ENCODE measurements at regions of chr9 and their contacts with region 1.

Region 1: DNA sequence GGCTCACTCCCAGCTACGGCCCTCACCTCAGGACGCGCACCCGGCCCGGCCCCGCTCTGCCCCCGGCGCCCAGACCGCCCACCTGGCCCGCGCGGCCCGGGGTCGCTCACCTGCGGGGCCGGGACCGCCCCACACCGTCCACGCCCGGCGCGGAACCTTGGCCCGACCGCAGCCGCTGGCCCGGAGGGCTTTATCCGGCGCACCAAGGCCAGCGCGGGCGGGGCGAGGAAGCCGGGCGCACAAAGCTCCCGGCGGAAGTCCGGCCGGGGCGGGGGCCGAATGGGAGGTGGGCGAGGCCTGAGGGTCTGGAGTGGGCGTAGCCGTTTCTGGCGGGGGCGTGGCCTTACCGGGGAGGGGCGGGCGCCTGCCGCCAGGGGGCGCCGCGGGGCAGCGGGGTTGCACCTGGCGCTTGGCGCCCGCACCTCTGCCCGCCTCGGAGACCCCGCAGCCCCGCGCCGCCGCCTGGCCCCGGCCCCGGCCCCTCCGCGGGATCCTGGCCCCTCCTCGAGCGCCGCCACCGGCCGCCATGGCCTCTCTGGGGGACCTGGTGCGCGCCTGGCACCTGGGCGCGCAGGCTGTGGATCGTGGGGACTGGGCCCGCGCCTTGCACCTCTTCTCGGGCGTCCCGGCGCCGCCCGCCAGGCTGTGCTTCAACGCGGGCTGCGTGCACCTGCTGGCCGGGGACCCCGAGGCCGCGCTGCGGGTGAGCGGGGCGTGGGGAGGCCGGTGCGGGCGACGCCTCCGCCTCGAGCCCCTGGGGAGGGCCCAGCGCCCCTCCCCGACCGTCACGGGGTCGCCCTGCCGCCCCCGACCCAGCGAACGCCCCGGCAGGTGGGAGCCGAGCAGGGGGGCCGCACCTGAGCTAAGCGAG is at the starts of genes EXD3 and NOXA1:
- H3K4me3 ChIP-seq: peak within 1 kb of the TSS; percentile 85
- H3K27ac ChIP-seq: peak within 1 kb of the TSS; percentile 86
- H3K4me1 ChIP-seq: peaks cover 9% of the 10 kb centered on the region
- CTCF ChIP-seq: peak; percentile 47; the same call in 1 of the 2 replicates

Region 2: GRCh38 chr9:137411671-137412380 is 11.4 kb before region 1 on chr9:
- CTCF ChIA-PET with region 1: interaction called, 19 read pairs
- POLR2A ChIA-PET with region 1: interaction called, 27 read pairs
- H3K4me3 ChIP-seq: peak overlapping the region; percentile 19
- H3K27ac ChIP-seq: 0 out of 2 replicates have a peak overlapping the region, but pooled peaks have one; percentile 16
- H3K4me1 ChIP-seq: peaks cover 4% of the 10 kb centered on the region; the same call in 1 of the 2 replicates
- CTCF ChIP-seq: no peak